Posterior vena cava (tissue), 2 donors: ENCODE measurements at regions of chr11 and their contacts with region 1.

Region 1: GRCh38 chr11:48081151-48082010 is 101.0 kb downstream of the PTPRJ start:
- DNase-seq: peak; percentile 95

Region 2: DNA sequence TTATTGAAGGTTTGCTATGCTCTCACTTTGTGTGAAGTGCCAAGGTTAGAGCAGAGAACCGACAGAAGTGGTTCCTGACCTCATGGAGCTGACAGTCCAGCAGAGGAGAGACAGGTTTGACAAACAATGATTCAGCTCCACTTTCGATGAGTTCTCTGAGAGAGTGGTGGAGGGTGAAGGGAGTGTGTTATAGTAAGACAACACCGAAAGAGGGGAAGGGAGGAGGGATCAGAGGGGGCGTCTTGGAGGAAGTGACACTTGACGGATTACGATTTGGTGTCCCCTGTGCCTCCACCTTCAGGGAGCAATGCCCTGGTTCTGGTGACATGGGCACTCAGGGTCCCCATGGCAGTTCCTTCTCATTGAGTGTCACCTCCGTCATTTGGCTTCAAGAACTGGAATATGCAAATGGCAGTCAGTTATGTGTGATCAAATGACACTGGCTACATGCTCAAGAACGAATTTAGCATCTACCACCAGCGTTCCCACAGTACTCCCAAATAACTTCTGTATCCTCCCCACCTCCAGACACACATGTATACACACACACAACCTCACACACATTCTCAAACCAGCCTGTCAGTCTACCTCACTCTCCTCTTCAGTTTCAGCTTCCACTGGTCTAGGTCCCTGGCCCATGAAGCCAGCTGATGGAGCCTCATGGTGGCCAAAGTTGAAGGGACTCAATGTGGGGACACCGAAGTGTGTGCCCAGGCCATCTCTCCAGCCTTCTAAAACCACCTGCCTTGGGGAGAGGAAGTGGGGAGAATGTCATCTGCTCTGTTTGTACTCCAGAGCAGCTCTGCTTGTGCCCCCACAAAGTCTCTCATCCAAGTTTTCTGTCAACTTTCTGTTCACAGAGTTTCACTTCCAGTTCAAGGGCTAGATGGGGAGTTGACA is 201.9 kb before region 1 on chr11:
- intact Hi-C with region 1: no loop called
- DNase-seq: no peak

Region 3: GRCh38 chr11:47980245-47981049 is 100.9 kb before region 1 on chr11 and contains the start of gene PTPRJ:
- intact Hi-C with region 1: loop called in 1 of 2 experiments (anchors 10 kb)
- DNase-seq: peak; percentile 85
- total RNA-seq, gene PTPRJ: 17.4 to 19.7 TPM

Region 4: GRCh38 chr11:48228761-48229160 is 147.4 kb after region 1 on chr11:
- intact Hi-C with region 1: no loop called
- DNase-seq: no peak